Sigmoid colon (tissue), 7 donors: ENCODE measurements at regions of chr6 and their contacts with region 1.

Region 1: GRCh38 chr6:73515204-73515655 is 5.6 kb downstream of the EEF1A1 start:
- DNase-seq: no peak
- H3K4me3 ChIP-seq: no peak overlapping the region
- H3K27ac ChIP-seq: peak overlapping the region; percentile 25 to 70 (median 52)
- H3K4me1 ChIP-seq: peaks cover 0 to 48% (median 46%) of the 10 kb centered on the region in 4 donors
- H3K27me3 ChIP-seq: no peaks in the 10 kb centered on the region
- CTCF ChIP-seq: no peak
- EP300 ChIP-seq: no peak
- POLR2A ChIP-seq: no peak

Region 2: GRCh38 chr6:73610444-73611275 is 95.4 kb after region 1 on chr6:
- intact Hi-C with region 1: loop called (anchors 1 kb)
- DNase-seq: no peak
- H3K4me3 ChIP-seq: no peak overlapping the region
- H3K27ac ChIP-seq: peak overlapping the region in 1 of 4 donors; percentile 38
- H3K4me1 ChIP-seq: peaks cover 0 to 5% (median 2%) of the 10 kb centered on the region in 4 donors
- H3K27me3 ChIP-seq: no peaks in the 10 kb centered on the region
- CTCF ChIP-seq: peak; percentile 44 to 70 (median 52)
- EP300 ChIP-seq: no peak
- POLR2A ChIP-seq: no peak

Region 3: DNA sequence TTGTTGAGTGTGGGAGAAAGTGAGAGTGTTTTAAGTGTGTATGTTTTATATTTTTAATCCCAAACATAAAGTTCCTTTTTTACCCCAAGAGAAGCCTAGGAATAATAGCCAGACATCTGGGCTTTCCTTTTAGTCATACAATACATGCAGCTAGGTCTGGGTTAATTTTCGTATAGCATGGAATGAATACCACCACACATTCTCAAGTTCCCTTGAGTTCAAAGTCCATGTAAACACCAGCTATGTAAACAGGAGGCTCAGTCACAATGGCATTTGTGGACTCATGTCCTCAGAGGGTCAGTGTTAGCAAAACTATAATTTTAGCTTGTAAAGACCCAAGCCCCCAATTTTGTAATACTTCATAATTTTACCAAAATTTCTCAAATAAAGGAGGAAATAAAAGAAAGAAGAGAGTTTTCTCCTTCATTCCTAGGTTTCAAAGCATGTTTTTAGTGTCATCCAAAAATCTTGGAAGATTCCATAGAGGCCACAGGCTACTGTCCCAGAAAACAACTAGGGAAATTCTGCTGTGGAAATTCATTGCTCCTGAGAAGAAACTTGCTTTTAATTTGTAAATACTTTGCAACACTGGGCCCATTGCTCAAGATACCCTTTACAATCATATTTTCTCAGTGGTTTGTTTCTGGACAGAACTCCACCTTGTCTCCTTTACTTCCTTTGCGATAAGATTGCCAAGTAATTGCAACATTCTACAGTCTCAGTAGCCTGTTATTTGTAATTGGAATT is 1019.4 kb after region 1 on chr6:
- intact Hi-C with region 1: no loop called
- DNase-seq: no peak
- H3K4me3 ChIP-seq: no peak overlapping the region
- H3K27ac ChIP-seq: peak overlapping the region in 2 of 4 donors; percentile 5 to 30
- H3K4me1 ChIP-seq: no peaks in the 10 kb centered on the region
- H3K27me3 ChIP-seq: no peaks in the 10 kb centered on the region
- CTCF ChIP-seq: no peak
- EP300 ChIP-seq: no peak
- POLR2A ChIP-seq: no peak